ENCODE measurements at regions of chr17 and their contacts with region 1.

Region 1: GRCh38 chr17:8189711-8190477 is at the start of gene BORCS6:
- DNase-seq: peak; percentile 96 to 98 (median 98)
- H3K4me3 ChIP-seq: peak within 1 kb of the TSS; percentile 82 to 90 (median 87)
- H3K4me3 Mint-ChIP-seq: no peak within 1 kb of the TSS
- H3K27ac ChIP-seq: peak within 1 kb of the TSS; percentile 78 to 89
- H3K27ac Mint-ChIP-seq: peak within 1 kb of the TSS in 6 of 7 donors; percentile 88 to 94 (median 92)
- H3K4me1 ChIP-seq: peaks cover 65 to 73% of the 10 kb centered on the region in 2 donors
- H3K4me1 Mint-ChIP-seq: peaks cover 9% of the 10 kb centered on the region
- H3K27me3 ChIP-seq: no peaks in the 10 kb centered on the region
- H3K27me3 Mint-ChIP-seq: peaks cover 0 to 5% (median under 1%) of the 10 kb centered on the region in 3 donors
- CTCF ChIP-seq: no peak
- polyA plus RNA-seq, gene BORCS6: 5.4 to 14.1 (median 13.9) TPM

Region 2: GRCh38 chr17:8118769-8119580 is 70.9 kb before region 1 on chr17:
- intact Hi-C with region 1: loop called (anchors 2 to 5 kb)
- DNase-seq: peak; percentile 60 to 85 (median 79)
- H3K4me3 ChIP-seq: peak overlapping the region; percentile 45 to 77 (median 61)
- H3K4me3 Mint-ChIP-seq: peak overlapping the region; percentile 85 to 93
- H3K27ac ChIP-seq: no peak overlapping the region
- H3K27ac Mint-ChIP-seq: peak overlapping the region; percentile 85 to 91 (median 87)
- H3K4me1 ChIP-seq: peaks cover 56 to 69% of the 10 kb centered on the region in 2 donors
- H3K4me1 Mint-ChIP-seq: peaks cover 61% of the 10 kb centered on the region
- H3K27me3 ChIP-seq: peaks cover 45 to 78% of the 10 kb centered on the region in 2 donors
- H3K27me3 Mint-ChIP-seq: peaks cover 73 to 91% (median 88%) of the 10 kb centered on the region in 3 donors
- CTCF ChIP-seq: peak; percentile 96

Region 3: DNA sequence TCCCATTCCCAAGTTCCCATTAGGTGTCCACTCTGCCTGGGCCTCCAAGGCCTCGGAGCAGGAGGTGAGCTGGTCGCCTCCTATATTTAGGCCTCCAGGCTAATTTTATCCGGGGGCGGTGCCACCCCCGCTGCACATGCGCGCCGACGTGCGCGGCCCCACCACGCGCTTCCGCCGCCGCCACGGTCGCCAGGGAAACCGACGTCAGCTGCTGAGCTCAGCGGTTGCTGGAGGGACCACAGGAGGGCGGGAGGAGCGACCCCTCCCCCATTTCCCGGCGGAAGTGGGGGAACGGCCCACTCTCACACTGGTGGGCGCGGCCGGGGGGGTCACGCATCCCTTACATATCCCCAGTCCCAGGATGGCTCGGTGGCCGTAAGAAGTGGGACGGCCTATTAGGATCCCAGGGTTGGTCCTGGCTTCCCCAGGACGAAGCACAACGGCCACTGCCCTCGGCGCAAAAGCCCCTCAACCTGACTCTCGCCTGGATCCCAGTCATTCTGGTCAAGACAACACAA is 38.7 kb before region 1 on chr17:
- intact Hi-C with region 1: loop called in 1 of 2 experiments (anchors 5 kb)
- DNase-seq: peak; percentile 72 to 75 (median 75)
- H3K4me3 ChIP-seq: peak overlapping the region; percentile 52 to 100 (median 88)
- H3K4me3 Mint-ChIP-seq: peak overlapping the region; percentile 97 to 99
- H3K27ac ChIP-seq: peak overlapping the region; percentile 97 to 99
- H3K27ac Mint-ChIP-seq: peak overlapping the region in 5 of 7 donors; percentile 78 to 99 (median 96)
- H3K4me1 ChIP-seq: peaks cover 46 to 60% of the 10 kb centered on the region in 2 donors
- H3K4me1 Mint-ChIP-seq: peaks cover 28% of the 10 kb centered on the region
- H3K27me3 ChIP-seq: no peaks in the 10 kb centered on the region
- H3K27me3 Mint-ChIP-seq: peaks cover 0 to 14% (median 0%) of the 10 kb centered on the region in 3 donors
- CTCF ChIP-seq: no peak

Region 4: GRCh38 chr17:8173056-8173870 is 16.6 kb before region 1 on chr17:
- intact Hi-C with region 1: loop called in 1 of 2 experiments (anchors 1 kb)
- DNase-seq: peak; percentile 92 to 95 (median 93)
- H3K4me3 ChIP-seq: peak overlapping the region; percentile 18 to 70 (median 39)
- H3K4me3 Mint-ChIP-seq: peak overlapping the region; percentile 41 to 86
- H3K27ac ChIP-seq: peak overlapping the region; percentile 65 to 98
- H3K27ac Mint-ChIP-seq: peak overlapping the region; percentile 98 to 100 (median 99)
- H3K4me1 ChIP-seq: peaks cover 31 to 48% of the 10 kb centered on the region in 2 donors
- H3K4me1 Mint-ChIP-seq: peaks cover 41% of the 10 kb centered on the region
- H3K27me3 ChIP-seq: no peaks in the 10 kb centered on the region
- H3K27me3 Mint-ChIP-seq: no peaks in the 10 kb centered on the region
- CTCF ChIP-seq: no peak

Region 5: GRCh38 chr17:8209909-8210760 is 20.2 kb after region 1 on chr17 and contains the start of gene AURKB:
- intact Hi-C with region 1: no loop called
- DNase-seq: peak; percentile 90 to 98 (median 96)
- H3K4me3 ChIP-seq: peak within 1 kb of the TSS; percentile 66 to 86 (median 84)
- H3K4me3 Mint-ChIP-seq: peak within 1 kb of the TSS; percentile 92 to 95
- H3K27ac ChIP-seq: peak within 1 kb of the TSS; percentile 69 to 80
- H3K27ac Mint-ChIP-seq: peak within 1 kb of the TSS; percentile 90 to 96 (median 94)
- H3K4me1 ChIP-seq: peaks cover 28 to 40% of the 10 kb centered on the region in 2 donors
- H3K4me1 Mint-ChIP-seq: peaks cover 35% of the 10 kb centered on the region
- H3K27me3 ChIP-seq: no peaks in the 10 kb centered on the region
- H3K27me3 Mint-ChIP-seq: no peaks in the 10 kb centered on the region
- CTCF ChIP-seq: no peak
- polyA plus RNA-seq, gene AURKB: 0.38 to 4.2 (median 0.79) TPM

Region 6: GRCh38 chr17:8248751-8249607 is 59.1 kb after region 1 on chr17 and contains the start of gene PFAS:
- intact Hi-C with region 1: loop called in 1 of 2 experiments (anchors 10 kb)
- DNase-seq: peak; percentile 93 to 95 (median 95)
- H3K4me3 ChIP-seq: peak within 1 kb of the TSS; percentile 61 to 88 (median 61)
- H3K4me3 Mint-ChIP-seq: peak within 1 kb of the TSS; percentile 95 to 98
- H3K27ac ChIP-seq: peak within 1 kb of the TSS; percentile 94 to 95
- H3K27ac Mint-ChIP-seq: peak within 1 kb of the TSS; percentile 97 to 100 (median 99)
- H3K4me1 ChIP-seq: peaks cover 16 to 23% of the 10 kb centered on the region in 2 donors
- H3K4me1 Mint-ChIP-seq: peaks cover 32% of the 10 kb centered on the region
- H3K27me3 ChIP-seq: no peaks in the 10 kb centered on the region
- H3K27me3 Mint-ChIP-seq: no peaks in the 10 kb centered on the region
- CTCF ChIP-seq: no peak
- polyA plus RNA-seq, gene PFAS: 4.1 to 12.8 (median 4.4) TPM

Measured in CD14-positive monocyte (primary cell).